Activated CD8-positive, alpha-beta T cell treated with anti-CD3 and anti-CD28 coated beads for 36 hours (primary cell): ENCODE measurements at regions of chr3 and their contacts with region 1.

Region 1: DNA sequence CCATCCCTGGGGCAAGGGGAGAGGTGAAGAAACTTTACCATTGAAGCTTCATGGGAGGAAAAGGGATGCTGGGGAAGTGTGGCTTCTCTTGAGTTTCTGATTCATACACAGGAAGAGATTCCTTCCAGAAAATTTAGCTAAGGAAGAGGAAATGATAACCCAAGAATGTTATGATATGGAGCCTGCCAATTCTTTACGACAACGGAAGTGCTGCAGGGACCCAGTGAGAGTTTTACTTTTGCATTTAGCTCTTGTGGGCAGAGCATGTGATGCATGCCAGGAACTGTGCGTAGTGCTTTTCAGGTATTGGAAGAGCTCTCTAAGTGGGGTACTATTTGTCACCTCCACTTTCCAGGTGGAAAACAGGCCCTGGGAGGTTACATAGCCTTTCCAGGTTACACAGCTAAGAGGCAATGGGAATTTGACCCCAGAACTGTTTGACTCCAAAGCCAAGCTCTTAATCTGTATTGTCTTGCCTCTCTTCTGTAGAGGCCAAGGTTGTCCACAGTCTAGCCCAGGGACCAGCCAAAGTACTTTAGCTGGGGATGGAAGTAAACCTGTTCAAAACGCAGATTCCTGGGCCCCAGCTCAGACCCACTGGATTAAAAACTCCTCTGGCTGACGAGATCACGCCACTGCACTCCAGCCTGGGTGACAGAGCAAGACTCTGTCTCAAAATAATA is 23.0 kb downstream of the CMTM7 start:
- DNase-seq: peak; percentile 67
- ATAC-seq: peak; percentile 89
- H3K4me3 Mint-ChIP-seq: peak overlapping the region; percentile 39
- H3K27ac Mint-ChIP-seq: peak overlapping the region; percentile 92
- H3K4me1 Mint-ChIP-seq: peaks cover 70% of the 10 kb centered on the region
- H3K27me3 Mint-ChIP-seq: no peaks in the 10 kb centered on the region
- CTCF ChIP-seq: no peak

Region 2: GRCh38 chr3:32428092-32429068 is 13.7 kb after region 1 on chr3:
- CTCF ChIA-PET with region 1: interaction called, 32 read pairs
- POLR2A ChIA-PET with region 1: interaction called, 17 read pairs
- intact Hi-C with region 1: no loop called
- DNase-seq: peak; percentile 74
- ATAC-seq: peak; percentile 28
- H3K4me3 Mint-ChIP-seq: peak overlapping the region; percentile 67
- H3K27ac Mint-ChIP-seq: peak overlapping the region; percentile 90
- H3K4me1 Mint-ChIP-seq: peaks cover 92% of the 10 kb centered on the region
- H3K27me3 Mint-ChIP-seq: no peaks in the 10 kb centered on the region
- CTCF ChIP-seq: no peak